Kidney (tissue), 22 donors: ENCODE measurements at regions of chr5 and their contacts with region 1.

Region 1: DNA sequence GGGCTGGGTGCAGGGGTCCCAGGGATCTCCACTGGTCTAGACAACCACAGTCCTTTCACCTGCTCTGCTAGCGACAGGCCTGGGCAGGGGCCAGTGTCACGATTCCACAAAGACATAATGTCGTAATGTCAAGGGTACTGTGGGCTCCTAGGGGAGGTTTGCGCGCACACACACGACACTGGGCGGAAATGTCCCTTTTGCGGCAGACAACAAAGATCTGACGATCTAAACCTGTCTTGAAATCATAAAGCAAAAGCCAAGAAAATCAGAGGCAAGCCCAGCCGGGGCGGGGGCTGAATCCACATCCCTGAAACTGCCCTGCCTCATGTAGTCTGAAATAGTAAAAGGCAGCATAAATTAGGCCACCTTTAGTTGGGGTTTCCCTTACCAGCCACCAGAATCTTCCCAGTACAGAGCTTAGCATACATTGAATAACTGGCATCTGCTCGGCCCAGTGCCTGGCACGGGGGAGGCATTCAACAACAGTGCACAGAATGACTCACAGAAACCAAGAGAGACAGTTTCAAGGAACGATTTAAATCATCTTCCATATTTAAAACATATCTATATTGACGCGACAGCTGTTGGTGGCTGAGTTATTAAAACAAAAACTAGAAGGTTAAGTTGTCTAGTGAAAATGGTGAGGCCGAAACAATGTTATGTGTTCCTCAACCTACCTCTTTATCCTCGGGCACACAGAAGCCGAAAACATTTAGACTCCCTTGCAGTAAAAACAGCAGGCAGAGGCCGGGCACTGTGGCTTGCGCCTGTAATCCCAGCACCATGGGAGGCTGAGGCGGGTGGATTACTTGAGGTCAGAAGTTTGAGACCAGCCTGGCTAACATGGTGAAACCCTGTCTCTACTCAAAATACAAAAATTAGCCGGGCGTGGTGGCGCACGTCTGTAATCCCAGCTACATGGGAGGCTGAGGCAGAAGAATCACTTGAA is 151.0 kb downstream of the MYO10 start:
- DNase-seq: no peak
- H3K4me3 ChIP-seq: no peak overlapping the region
- H3K27ac ChIP-seq: no peak overlapping the region
- H3K4me1 ChIP-seq: peaks cover 0 to 2% (median 0%) of the 10 kb centered on the region in 3 donors
- H3K27me3 ChIP-seq: no peaks in the 10 kb centered on the region
- CTCF ChIP-seq: no peak

Region 2: GRCh38 chr5:17037751-17038150 is 252.6 kb after region 1 on chr5:
- intact Hi-C with region 1: no loop called
- DNase-seq: no peak
- H3K4me3 ChIP-seq: no peak overlapping the region
- H3K27ac ChIP-seq: no peak overlapping the region
- H3K4me1 ChIP-seq: no peaks in the 10 kb centered on the region
- H3K27me3 ChIP-seq: no peaks in the 10 kb centered on the region
- CTCF ChIP-seq: no peak

Region 3: DNA sequence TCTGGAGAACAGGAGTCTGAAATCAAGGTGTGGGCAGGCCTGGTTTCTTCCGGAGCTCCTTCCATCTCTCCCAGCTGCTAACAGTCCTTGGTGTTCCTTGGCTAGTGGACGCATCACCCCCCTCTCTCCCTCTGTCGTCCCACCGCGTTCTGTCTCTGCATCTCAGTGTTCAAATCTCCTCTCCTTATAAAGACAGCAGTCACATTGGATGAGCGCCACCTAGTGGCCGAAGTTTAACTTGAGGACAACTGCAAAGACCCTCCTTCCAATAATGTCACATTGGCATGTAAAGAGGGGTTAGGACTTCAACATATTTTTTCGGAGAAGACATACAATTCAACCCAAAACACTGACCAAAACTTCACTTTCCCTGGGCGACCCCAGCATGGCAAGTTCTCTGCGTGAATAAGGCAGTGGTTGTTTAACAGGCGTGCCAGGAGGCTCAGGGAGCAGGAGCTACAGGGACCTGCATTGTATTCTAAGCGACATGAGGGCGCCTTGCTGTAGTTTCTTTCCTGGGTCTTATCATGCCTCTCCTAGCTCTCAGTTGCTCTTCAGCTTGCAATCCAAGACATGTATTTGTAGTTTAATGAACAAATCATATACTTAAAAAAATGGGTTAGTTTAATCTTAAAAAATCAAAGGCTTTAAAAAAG is 404.4 kb after region 1 on chr5:
- intact Hi-C with region 1: loop called (anchors 5 kb)
- DNase-seq: peak; percentile 79 to 90 (median 83)
- H3K4me3 ChIP-seq: no peak overlapping the region
- H3K27ac ChIP-seq: no peak overlapping the region
- H3K4me1 ChIP-seq: peaks cover 0 to 6% (median 0%) of the 10 kb centered on the region in 3 donors
- H3K27me3 ChIP-seq: no peaks in the 10 kb centered on the region
- CTCF ChIP-seq: peak; percentile 65